A673 (cell line): ENCODE measurements at regions of chr3 and their contacts with region 1.

Region 1: DNA sequence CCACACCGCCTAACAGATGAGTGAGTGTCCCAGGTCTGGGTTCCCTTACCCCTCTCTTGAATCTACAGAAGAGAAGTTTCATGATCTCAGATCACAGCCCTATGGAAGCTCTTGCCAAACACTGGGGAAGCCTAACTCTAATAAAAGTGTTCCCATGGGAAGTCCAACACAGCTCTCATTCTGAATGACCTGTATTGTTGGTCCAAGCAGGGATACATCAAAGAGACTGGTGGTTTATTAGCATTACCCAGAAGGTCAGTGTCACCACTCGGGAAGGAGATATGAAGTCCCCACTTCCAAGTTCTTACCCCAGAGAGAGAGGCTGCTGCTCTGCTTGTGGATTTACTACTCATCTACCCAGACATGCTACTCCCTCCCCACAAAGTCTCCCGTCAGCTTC is 9.0 kb upstream of the NCBP2 start:
- DNase-seq: no peak
- H3K4me3 ChIP-seq: no peak overlapping the region
- H3K27ac ChIP-seq: no peak overlapping the region
- H3K4me1 ChIP-seq: no peaks in the 10 kb centered on the region
- H3K27me3 ChIP-seq: no peaks in the 10 kb centered on the region
- CTCF ChIP-seq: no peak

Region 2: DNA sequence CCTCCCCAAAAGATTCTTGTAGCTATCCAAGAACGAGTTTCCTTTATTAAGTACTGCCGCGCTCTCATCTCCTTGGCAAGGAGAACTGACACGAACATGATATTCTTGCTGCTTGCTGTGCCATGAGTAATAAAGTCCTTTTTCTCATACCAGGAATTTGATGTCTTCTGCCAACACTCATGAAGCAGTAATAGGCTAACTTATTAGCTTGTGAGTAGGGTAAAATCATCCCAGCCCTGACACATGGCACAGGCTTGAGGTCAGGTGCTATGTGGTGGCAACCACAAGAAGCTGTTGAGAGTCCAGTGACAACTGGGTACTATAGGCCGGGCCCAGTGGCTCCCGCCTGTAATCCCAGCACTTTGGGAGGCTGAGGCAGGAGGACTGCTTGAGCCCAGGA is 496.4 kb before region 1 on chr3:
- CTCF ChIA-PET with region 1: no interaction called
- POLR2A ChIA-PET with region 1: interaction called, 13 read pairs
- intact Hi-C with region 1: no loop called
- DNase-seq: no peak
- H3K4me3 ChIP-seq: no peak overlapping the region
- H3K27ac ChIP-seq: no peak overlapping the region
- H3K4me1 ChIP-seq: no peaks in the 10 kb centered on the region
- H3K27me3 ChIP-seq: no peaks in the 10 kb centered on the region
- CTCF ChIP-seq: no peak

Region 3: DNA sequence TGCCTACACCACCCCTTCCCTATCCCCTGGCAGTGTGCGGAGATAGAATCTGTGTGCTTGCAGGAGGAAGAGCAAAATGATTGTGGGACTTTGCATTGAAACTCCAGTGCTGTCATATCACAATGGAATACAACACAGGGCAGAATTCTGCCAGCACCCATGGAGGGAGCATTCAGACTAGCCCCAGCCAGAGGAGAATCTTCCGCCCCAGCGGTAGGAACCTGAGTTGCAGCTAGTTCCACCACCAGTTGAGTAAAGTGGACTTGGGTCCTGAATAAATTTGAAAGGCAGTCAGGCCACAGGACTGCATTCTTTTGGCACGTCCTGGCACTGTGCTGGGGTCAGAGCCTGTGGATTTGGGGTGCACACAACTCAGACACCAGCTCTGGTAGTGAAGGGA is 36.5 kb before region 1 on chr3:
- CTCF ChIA-PET with region 1: no interaction called
- POLR2A ChIA-PET with region 1: no interaction called
- intact Hi-C with region 1: no loop called
- DNase-seq: no peak
- H3K4me3 ChIP-seq: no peak overlapping the region
- H3K27ac ChIP-seq: no peak overlapping the region
- H3K4me1 ChIP-seq: no peaks in the 10 kb centered on the region
- H3K27me3 ChIP-seq: no peaks in the 10 kb centered on the region
- CTCF ChIP-seq: no peak